ENCODE measurements at regions of chr22 and their contacts with region 1.

Region 1: GRCh38 chr22:42990139-42990767 is 24.7 kb downstream of the PACSIN2 start:
- H3K4me3 ChIP-seq: no peak overlapping the region
- H3K27ac ChIP-seq: no peak overlapping the region
- H3K4me1 ChIP-seq: peaks cover 16% of the 10 kb centered on the region; the same call in 1 of the 2 replicates
- CTCF ChIP-seq: no peak; the same call in 1 of the 2 replicates

Region 2: DNA sequence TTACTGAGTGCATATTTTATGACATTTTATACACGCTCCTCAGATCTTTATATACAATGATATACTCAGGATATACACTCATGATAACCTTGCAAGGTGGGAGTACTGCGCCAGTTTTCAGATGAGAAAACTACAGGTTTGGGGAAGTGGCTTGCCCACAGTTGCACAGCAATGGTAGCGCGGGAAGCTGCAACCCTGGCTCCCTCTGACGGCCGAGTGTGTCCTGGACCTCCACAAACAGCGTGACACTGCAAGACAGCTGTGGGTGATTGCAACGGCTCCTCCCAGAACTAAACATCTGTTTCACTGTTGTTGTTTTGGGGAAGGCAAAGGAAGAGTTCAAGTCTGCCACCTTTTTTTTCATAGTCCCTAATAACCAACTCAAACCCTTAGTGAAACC is 22.3 kb before region 1 on chr22:
- CTCF ChIA-PET with region 1: no interaction called
- POLR2A ChIA-PET with region 1: no interaction called
- H3K4me3 ChIP-seq: no peak overlapping the region
- H3K27ac ChIP-seq: no peak overlapping the region
- H3K4me1 ChIP-seq: peaks cover 18% of the 10 kb centered on the region
- CTCF ChIP-seq: no peak

Region 3: DNA sequence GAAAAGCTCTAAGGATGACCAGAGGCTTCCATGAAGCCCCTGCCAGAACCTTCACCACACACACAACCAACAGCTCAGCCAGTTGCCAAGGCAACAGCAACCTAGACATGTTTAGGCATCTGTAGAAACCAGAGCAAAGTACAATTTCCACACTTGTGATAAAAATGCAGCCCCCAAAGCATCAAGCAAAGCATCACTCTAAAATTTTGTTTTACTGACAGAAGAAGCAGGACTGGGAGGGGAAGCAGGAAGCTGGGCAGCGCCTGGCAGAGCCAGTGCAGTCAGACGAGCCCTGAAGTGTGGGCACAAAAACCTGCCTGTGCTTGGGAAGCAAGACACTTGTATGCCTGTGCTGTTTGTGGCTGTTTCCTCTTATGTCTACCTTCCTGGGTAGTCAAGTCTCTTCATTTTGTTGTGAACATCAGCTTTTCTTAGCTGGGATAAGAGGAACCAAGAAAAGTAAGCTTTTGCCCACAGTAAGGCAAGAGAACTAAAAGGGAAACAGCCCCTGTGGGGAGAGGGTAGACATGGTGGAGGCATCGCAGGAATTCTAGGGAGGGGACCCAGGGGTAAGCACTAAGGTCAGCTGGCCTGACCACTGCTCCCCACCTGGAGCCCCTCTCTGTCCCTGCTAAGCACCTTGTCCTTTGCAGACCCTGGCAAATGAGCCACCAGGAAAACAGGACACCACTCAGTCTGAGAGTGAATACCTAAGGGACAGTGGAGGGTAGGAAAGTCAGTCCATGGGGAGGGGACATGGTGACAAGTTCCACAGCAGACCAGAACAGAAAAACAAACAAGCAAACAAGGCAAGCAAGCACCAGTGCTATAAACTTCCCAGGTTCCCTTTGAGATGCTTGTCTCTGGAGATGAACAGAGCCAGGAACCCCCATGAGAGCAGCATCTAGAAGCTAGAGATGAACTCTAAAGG is 11.3 kb after region 1 on chr22:
- CTCF ChIA-PET with region 1: interaction called, 13 read pairs
- POLR2A ChIA-PET with region 1: interaction called, 4 read pairs
- H3K4me3 ChIP-seq: no peak overlapping the region
- H3K27ac ChIP-seq: no peak overlapping the region
- H3K4me1 ChIP-seq: peaks cover 29% of the 10 kb centered on the region
- CTCF ChIP-seq: no peak

Region 4: GRCh38 chr22:43151251-43152002 is 161.2 kb after region 1 on chr22 and contains the start of gene TSPO:
- CTCF ChIA-PET with region 1: no interaction called
- POLR2A ChIA-PET with region 1: no interaction called
- H3K4me3 ChIP-seq: peak within 1 kb of the TSS; percentile 51
- H3K27ac ChIP-seq: peak within 1 kb of the TSS; percentile 49; the same call in 1 of the 2 replicates
- H3K4me1 ChIP-seq: peaks cover 10% of the 10 kb centered on the region
- CTCF ChIP-seq: no peak